ENCODE measurements at regions of chr19 and their contacts with region 1.

Region 1: DNA sequence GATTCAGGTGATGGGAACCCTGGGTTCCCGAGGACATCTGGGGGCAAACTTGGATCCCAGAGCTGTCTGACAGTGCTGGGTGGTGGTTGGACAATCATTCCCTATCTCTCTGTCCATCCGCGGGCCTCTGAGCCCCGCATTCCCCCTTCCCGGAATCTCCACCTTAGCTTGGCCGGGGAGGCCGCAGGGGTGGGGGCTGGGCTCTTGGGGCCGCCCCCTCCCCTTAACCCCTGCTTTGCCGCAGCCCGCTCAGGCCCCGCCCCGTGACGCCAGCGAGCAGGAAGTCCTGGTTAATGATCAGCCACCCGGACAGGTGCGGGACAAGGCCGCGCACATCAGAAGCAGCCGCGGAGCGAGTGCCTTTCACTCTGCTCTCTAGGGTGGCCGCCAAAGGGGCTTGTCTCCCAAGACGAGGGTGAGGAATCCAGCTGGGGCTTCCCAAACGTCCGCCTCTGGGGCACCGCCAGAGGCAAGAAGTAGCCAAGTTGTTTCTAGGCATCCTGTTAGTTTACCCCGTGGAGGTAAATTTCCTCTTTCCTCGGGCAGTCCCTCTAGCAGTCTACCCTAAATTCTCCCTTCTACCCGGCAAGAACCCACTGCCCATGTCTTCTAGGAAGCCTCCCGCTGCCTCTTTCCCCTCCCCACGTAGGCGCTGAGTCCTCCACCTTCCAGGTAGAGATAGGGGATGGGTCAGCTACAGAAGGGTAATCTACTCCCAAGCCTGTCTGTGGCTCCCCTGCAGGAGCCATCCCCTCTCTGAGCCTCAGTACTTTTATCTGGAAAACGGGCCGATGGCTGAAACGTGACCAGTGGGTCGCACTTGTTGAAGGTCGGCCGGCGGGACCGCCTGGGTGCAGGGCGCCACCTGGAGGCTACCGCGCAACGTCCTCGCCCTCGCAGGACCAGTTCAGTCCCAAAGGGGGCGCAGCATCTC is 3.0 kb downstream of the IRF2BP1 start:
- DNase-seq: peak; percentile 88 to 94
- ATAC-seq: peak; percentile 53
- H3K4me3 ChIP-seq: no peak overlapping the region
- H3K27ac ChIP-seq: no peak overlapping the region
- H3K4me1 ChIP-seq: peaks cover 0 to 3% of the 10 kb centered on the region in 2 donors
- H3K27me3 ChIP-seq: no peaks in the 10 kb centered on the region

Region 2: DNA sequence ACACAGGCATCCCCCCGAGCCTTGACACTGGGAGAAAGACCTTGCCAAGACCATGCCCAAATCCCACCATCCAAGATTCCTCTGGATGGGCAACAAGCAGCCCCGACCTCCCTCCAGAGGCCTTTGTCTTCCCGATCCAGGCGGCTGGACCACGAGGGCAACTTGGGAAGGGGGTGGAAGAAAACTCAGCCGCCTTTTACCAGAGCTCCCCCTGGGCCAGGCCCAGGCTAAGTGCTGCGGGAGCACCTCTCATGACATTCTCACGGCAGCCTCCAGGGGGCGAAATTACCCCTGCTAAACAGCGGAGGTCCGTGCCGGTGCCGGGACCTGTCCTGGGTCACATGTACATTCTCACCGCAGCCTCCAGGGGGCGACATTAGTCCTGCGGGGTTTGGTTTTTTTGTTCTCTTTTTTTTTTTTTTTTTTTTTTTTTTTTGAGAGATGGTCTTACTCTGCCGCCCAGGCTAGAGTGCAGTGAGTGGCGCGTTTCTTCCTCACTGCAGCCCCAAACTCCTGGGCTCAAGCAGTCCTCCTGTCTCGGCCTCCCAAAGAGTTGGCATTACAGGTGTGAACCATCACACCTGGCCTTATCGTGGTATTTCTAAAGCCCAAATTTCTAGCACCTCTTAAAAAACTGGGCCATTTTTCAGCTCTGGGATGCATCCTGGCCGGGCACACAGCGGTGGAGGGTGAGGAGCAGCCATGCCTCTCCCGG is 65.8 kb before region 1 on chr19:
- intact Hi-C with region 1: loop called in 1 of 2 experiments (anchors 5 kb)
- DNase-seq: peak; percentile 96 to 98
- ATAC-seq: peak; percentile 92
- H3K4me3 ChIP-seq: no peak overlapping the region
- H3K27ac ChIP-seq: no peak overlapping the region
- H3K4me1 ChIP-seq: no peaks in the 10 kb centered on the region
- H3K27me3 ChIP-seq: no peaks in the 10 kb centered on the region